GM12878 (cell line): ENCODE measurements at regions of chr4 and their contacts with region 1.

Region 1: DNA sequence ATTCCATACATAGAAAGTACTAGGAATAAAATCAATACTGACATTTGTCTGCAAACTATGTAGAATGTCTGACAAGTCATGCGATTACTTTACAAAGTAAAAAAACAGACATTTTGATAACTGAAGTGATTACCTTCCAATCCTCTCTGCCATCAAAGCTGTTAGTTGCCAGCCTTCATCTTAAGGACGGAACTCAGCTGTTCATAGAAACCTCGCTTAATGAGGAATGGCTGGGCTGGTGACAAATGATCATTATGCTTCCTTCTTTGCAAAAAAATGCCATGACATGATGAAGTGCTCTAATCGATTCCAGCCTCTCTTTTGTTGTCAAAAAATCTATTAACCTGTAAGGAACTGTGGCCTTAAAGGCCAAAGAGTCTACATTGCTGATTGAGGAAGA is 1214.9 kb upstream of the IGFBP7 start:
- DNase-seq: no peak
- ATAC-seq: no peak
- H3K4me3 ChIP-seq: no peak overlapping the region
- H3K27ac ChIP-seq: no peak overlapping the region
- H3K4me1 ChIP-seq: no peaks in the 10 kb centered on the region
- H3K27me3 ChIP-seq: no peaks in the 10 kb centered on the region
- CTCF ChIP-seq: no peak
- EP300 ChIP-seq: no peak
- POLR2A ChIP-seq: no peak
- RAD21 ChIP-seq: no peak

Region 2: GRCh38 chr4:58225460-58225859 is 99.6 kb before region 1 on chr4:
- CTCF ChIA-PET with region 1: no interaction called
- POLR2A ChIA-PET with region 1: no interaction called
- RAD21 ChIA-PET with region 1: no interaction called
- SMC1A ChIA-PET with region 1: no interaction called
- in situ Hi-C with region 1: no loop called
- intact Hi-C with region 1: no loop called
- DNase-seq: no peak
- ATAC-seq: no peak
- H3K4me3 ChIP-seq: no peak overlapping the region
- H3K27ac ChIP-seq: no peak overlapping the region
- H3K4me1 ChIP-seq: no peaks in the 10 kb centered on the region
- H3K27me3 ChIP-seq: no peaks in the 10 kb centered on the region
- CTCF ChIP-seq: no peak; a peak in 1 of 6 replicates
- EP300 ChIP-seq: no peak
- POLR2A ChIP-seq: no peak
- RAD21 ChIP-seq: no peak

Region 3: GRCh38 chr4:58360354-58361133 is 35.5 kb after region 1 on chr4:
- CTCF ChIA-PET with region 1: no interaction called
- POLR2A ChIA-PET with region 1: no interaction called
- RAD21 ChIA-PET with region 1: no interaction called
- SMC1A ChIA-PET with region 1: no interaction called
- in situ Hi-C with region 1: no loop called
- intact Hi-C with region 1: loop called (anchors 1 kb)
- DNase-seq: no peak
- ATAC-seq: no peak
- H3K4me3 ChIP-seq: no peak overlapping the region
- H3K27ac ChIP-seq: no peak overlapping the region
- H3K4me1 ChIP-seq: no peaks in the 10 kb centered on the region
- H3K27me3 ChIP-seq: no peaks in the 10 kb centered on the region
- CTCF ChIP-seq: no peak
- EP300 ChIP-seq: no peak
- POLR2A ChIP-seq: no peak
- RAD21 ChIP-seq: no peak